ENCODE measurements at regions of chr9 and their contacts with region 1.

Region 1: GRCh38 chr9:120438836-120439546 is 141.0 kb downstream of the CDK5RAP2 start:
- DNase-seq: peak in 1 of 2 experiments; percentile 59
- H3K4me3 ChIP-seq: no peak overlapping the region
- H3K27ac ChIP-seq: no peak overlapping the region
- H3K4me1 ChIP-seq: no peaks in the 10 kb centered on the region
- H3K27me3 ChIP-seq: no peaks in the 10 kb centered on the region
- CTCF ChIP-seq: peak; percentile 58 to 81 (median 71)
- EP300 ChIP-seq: no peak
- POLR2A ChIP-seq: no peak
- RAD21 ChIP-seq: peak; percentile 77 to 82

Region 2: DNA sequence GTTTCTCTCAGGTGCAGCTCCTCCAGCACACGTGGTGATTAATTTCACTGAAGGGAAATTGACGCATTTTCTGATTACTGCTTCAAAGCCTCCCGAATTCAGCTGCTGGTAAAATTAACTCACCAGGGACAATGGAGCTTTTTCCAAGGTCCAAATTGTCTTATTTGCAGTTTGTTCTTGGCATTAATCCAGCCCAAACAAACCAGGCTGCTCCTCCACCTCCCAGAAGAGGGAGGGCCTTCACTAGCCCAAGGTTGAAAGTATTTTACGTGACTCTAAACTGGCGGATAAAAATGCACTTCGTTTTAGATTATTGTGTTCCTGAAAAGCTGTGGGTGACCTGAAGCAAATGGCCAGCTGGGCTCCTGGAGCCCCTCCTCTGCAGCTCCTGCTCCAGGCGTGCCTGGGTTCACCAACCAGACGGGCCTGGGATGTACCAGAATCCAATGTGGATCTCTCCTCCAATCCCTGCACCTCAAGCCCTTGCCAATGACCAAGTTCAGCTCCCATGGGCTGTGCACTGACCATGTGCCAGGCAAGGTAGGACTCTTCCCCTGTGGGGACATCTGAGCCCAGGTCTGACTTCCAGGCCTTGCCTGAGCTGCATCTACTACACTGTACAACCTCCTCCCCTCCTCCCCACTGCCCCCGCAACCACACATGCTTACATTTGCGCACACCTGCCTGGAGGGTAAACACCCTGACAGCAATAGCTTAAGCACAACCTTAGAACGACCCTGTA is 52.4 kb before region 1 on chr9:
- CTCF ChIA-PET with region 1: interaction called, 26 read pairs
- POLR2A ChIA-PET with region 1: no interaction called
- DNase-seq: no peak
- H3K4me3 ChIP-seq: no peak overlapping the region
- H3K27ac ChIP-seq: no peak overlapping the region
- H3K4me1 ChIP-seq: 0 out of 7 replicates have a peak, but pooled peaks cover 0 to 7% (median 0%) of the 10 kb centered on the region in 4 experiments
- H3K27me3 ChIP-seq: no peaks in the 10 kb centered on the region; a peak in 1 of 7 replicates
- CTCF ChIP-seq: no peak
- EP300 ChIP-seq: no peak
- POLR2A ChIP-seq: no peak
- RAD21 ChIP-seq: no peak

Region 3: GRCh38 chr9:120412425-120412951 is 26.5 kb before region 1 on chr9:
- CTCF ChIA-PET with region 1: interaction called, 40 read pairs
- POLR2A ChIA-PET with region 1: no interaction called
- DNase-seq: peak in 1 of 2 experiments; percentile 47
- H3K4me3 ChIP-seq: peak overlapping the region in 1 of 4 experiments; percentile 28; a peak in 3 of 8 replicates
- H3K27ac ChIP-seq: peak overlapping the region; percentile 81
- H3K4me1 ChIP-seq: peaks cover 9 to 30% (median 27%) of the 10 kb centered on the region in 4 experiments; a peak in 6 of 7 replicates
- H3K27me3 ChIP-seq: no peaks in the 10 kb centered on the region
- CTCF ChIP-seq: no peak
- EP300 ChIP-seq: no peak
- POLR2A ChIP-seq: no peak
- RAD21 ChIP-seq: no peak

Region 4: DNA sequence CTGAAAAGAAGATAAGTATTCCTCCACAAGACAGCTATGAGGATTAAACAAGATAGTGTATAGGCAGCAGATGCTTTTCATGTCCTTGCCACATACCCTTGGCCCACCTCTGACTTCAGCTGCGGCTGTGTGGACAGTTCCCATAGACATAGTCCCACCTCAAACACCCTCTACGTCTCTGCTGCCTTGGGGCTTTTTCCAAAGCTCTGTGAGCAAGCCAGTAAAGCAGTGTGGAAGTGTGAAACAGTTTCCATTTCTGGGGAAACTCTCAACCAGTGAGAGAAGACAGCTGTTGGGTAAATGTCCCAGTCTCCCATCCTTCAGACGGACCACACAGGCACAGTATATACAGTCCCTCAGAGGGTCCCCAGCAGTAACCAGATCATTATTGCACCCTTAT is 15.5 kb after region 1 on chr9:
- CTCF ChIA-PET with region 1: interaction called, 25 read pairs
- POLR2A ChIA-PET with region 1: no interaction called
- DNase-seq: no peak
- H3K4me3 ChIP-seq: no peak overlapping the region
- H3K27ac ChIP-seq: no peak overlapping the region
- H3K4me1 ChIP-seq: peaks cover 0 to 5% (median 0%) of the 10 kb centered on the region in 4 experiments; a peak in 2 of 7 replicates
- H3K27me3 ChIP-seq: no peaks in the 10 kb centered on the region
- CTCF ChIP-seq: no peak
- EP300 ChIP-seq: no peak
- POLR2A ChIP-seq: no peak
- RAD21 ChIP-seq: no peak

Region 5: DNA sequence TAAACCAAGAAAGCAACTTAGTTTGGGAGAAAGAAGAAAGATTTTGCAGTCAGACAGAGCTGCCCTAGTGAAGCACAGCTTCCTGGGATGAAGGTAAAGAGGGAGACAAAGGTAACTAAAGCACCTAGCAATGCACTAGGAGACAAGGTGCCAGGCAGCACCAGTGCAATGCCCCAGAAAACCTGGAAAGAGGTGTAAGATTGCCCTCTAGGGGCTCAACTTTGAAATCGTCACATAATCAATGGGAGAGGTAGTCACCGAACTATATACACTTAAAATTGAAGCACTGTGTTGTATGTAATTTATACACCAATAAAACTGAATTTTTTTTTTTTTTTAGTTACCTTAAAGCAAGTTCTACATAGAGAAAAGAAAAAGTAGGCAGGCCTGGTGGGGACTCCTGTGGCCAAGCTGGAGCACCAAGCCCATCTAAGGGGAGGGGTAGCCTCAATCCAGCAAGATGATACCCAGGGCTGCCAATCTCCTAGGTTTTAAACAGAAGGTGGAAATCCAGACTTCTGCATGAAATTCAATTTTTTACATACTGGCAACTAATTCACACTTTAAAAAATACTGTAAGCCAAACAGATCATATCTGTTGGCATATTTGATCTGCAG is 92.8 kb after region 1 on chr9:
- CTCF ChIA-PET with region 1: interaction called, 23 read pairs
- POLR2A ChIA-PET with region 1: no interaction called
- DNase-seq: peak in 1 of 2 experiments; percentile 52
- H3K4me3 ChIP-seq: no peak overlapping the region
- H3K27ac ChIP-seq: no peak overlapping the region
- H3K4me1 ChIP-seq: peaks cover 0 to 14% (median 10%) of the 10 kb centered on the region in 4 experiments; a peak in 6 of 7 replicates
- H3K27me3 ChIP-seq: no peaks in the 10 kb centered on the region
- CTCF ChIP-seq: peak; percentile 26 to 63 (median 56)
- EP300 ChIP-seq: no peak
- POLR2A ChIP-seq: no peak
- RAD21 ChIP-seq: peak; percentile 78 to 79